HEK293 (cell line): ENCODE measurements at regions of chr19 and their contacts with region 1.

Region 1: GRCh38 chr19:42881229-42881628 is 1.7 kb upstream of the PSG1 start:
- H3K4me3 ChIP-seq: no peak overlapping the region
- H3K27ac ChIP-seq: no peak overlapping the region
- H3K4me1 ChIP-seq: no peaks in the 10 kb centered on the region
- CTCF ChIP-seq: no peak

Region 2: DNA sequence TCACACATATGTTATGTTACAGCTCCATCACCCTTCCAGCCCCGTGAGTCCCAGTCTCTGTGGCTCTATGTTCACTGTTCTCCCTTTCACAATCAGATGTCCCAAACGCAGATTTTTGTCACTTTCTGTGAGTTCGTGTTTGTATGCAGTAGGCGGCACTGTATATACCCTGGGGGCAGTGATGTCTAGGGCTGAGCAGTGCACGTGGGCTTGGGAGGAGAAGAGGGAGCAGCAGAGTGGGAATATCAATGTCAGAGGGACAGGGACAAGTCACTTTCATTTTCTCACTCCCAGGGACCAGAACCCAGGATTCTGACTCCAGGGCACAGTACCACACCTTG is 23.7 kb before region 1 on chr19:
- CTCF ChIA-PET with region 1: interaction called, 15 read pairs
- POLR2A ChIA-PET with region 1: no interaction called
- H3K4me3 ChIP-seq: no peak overlapping the region
- H3K27ac ChIP-seq: no peak overlapping the region
- H3K4me1 ChIP-seq: no peaks in the 10 kb centered on the region
- CTCF ChIP-seq: no peak

Region 3: DNA sequence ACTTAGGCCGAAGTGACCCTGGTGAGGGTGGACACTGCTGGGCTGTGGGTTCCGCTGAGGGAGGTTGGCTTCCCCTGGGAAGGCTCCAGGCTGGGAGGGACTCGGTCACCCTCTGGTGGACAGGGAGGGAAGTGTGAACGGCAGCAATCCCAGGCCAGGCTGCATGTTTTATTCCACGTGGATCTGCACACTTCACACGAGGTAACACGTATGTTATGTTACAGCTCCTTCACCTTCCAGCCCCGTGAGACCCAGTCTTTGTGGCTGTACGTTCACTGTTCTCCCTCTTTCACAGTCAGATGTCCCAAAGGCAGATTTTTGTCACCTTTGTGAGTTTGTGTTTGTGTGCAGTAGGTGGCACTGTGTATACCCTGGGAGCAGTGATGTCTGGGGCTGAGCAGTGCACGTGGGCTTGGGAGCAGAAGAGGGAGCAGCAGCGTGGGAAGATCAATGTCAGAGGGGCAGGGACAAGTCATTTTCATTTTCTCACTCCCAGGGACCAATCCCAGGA is 38.3 kb after region 1 on chr19:
- CTCF ChIA-PET with region 1: interaction called, 21 read pairs
- POLR2A ChIA-PET with region 1: no interaction called
- H3K4me3 ChIP-seq: no peak overlapping the region
- H3K27ac ChIP-seq: no peak overlapping the region
- H3K4me1 ChIP-seq: no peaks in the 10 kb centered on the region
- CTCF ChIP-seq: no peak

Region 4: GRCh38 chr19:43148233-43148632 is 267.0 kb after region 1 on chr19:
- CTCF ChIA-PET with region 1: no interaction called
- POLR2A ChIA-PET with region 1: no interaction called
- H3K4me3 ChIP-seq: no peak overlapping the region
- H3K27ac ChIP-seq: no peak overlapping the region
- H3K4me1 ChIP-seq: no peaks in the 10 kb centered on the region
- CTCF ChIP-seq: no peak